Endothelial cell of umbilical vein (primary cell): ENCODE measurements at regions of chr7 and their contacts with region 1.

Region 1: DNA sequence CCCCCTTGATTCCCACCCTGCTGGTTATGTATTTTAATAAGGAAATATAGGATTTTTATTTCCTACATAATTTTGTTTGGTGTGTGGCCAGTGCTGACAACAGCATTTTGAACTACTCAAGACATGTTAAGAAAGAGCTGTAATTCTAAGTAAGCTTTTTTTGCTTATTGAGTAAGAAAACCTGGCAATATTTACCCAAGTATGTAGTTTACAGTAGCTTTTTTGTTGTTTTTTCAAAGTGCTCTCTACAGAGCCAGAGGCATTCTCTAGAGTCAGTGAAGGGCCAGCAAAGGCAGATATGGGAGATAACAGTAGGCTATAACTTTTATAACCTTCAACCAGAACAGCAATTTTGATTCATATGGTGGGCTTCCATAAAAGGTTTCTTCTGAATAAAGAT is 63.2 kb upstream of the TMEM168 start:
- DNase-seq: no peak
- H3K4me3 ChIP-seq: no peak overlapping the region
- H3K27ac ChIP-seq: no peak overlapping the region
- H3K4me1 ChIP-seq: no peaks in the 10 kb centered on the region
- H3K27me3 ChIP-seq: no peaks in the 10 kb centered on the region
- CTCF ChIP-seq: no peak
- POLR2A ChIP-seq: no peak

Region 2: GRCh38 chr7:112779667-112780066 is 73.8 kb before region 1 on chr7:
- CTCF ChIA-PET with region 1: no interaction called
- POLR2A ChIA-PET with region 1: no interaction called
- dilution Hi-C with region 1: no loop called
- intact Hi-C with region 1: no loop called
- DNase-seq: no peak
- H3K4me3 ChIP-seq: no peak overlapping the region
- H3K27ac ChIP-seq: no peak overlapping the region
- H3K4me1 ChIP-seq: peaks cover 6% of the 10 kb centered on the region
- H3K27me3 ChIP-seq: no peaks in the 10 kb centered on the region
- CTCF ChIP-seq: no peak
- POLR2A ChIP-seq: no peak

Region 3: DNA sequence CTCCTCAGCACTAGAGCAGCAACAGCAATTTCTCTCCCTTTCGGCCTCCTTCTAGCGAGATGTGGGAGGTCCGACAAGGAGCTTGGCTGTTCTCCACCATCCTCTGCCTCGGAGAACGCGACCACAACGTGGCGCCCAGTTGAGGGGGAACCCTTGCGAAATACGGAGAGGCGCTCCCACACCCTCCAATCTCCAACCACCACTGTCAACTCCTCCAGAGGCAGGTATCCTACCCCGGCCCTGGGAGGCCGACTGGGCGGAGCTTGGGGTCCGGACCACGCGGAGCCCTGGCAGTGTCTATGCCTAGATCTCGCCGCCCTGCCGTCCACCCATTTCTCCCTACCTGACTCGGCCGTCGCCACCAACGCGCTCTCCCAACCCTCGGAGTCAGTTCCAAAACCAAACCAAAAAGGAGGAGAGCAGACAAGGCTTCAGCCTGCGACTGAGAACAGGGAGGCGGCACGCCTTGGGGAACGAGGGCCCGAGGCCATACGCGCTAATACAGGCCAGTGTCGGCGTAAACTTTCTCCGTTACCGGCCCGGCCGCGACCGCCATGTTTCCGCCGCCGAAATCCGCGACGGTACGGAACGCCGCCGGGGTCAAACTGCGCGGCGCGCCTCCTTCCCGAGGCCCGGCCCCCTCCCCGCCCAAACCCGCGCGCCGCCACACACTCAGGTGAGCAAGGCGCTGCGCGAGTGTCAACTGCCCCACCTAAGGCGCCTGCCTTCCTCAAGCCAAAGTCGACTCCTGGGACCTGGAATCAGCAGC is 63.4 kb before region 1 on chr7 and contains the start of gene TMEM168:
- CTCF ChIA-PET with region 1: no interaction called
- POLR2A ChIA-PET with region 1: no interaction called
- dilution Hi-C with region 1: no loop called
- intact Hi-C with region 1: no loop called
- DNase-seq: peak; percentile 87
- H3K4me3 ChIP-seq: peak within 1 kb of the TSS; percentile 84 to 87 (median 86)
- H3K27ac ChIP-seq: peak within 1 kb of the TSS; percentile 76
- H3K4me1 ChIP-seq: peaks cover 18% of the 10 kb centered on the region
- H3K27me3 ChIP-seq: no peaks in the 10 kb centered on the region
- CTCF ChIP-seq: no peak
- POLR2A ChIP-seq: peak; percentile 85
- total RNA-seq, gene TMEM168: 23.8 and 24.4 TPM in 2 replicates

Region 4: DNA sequence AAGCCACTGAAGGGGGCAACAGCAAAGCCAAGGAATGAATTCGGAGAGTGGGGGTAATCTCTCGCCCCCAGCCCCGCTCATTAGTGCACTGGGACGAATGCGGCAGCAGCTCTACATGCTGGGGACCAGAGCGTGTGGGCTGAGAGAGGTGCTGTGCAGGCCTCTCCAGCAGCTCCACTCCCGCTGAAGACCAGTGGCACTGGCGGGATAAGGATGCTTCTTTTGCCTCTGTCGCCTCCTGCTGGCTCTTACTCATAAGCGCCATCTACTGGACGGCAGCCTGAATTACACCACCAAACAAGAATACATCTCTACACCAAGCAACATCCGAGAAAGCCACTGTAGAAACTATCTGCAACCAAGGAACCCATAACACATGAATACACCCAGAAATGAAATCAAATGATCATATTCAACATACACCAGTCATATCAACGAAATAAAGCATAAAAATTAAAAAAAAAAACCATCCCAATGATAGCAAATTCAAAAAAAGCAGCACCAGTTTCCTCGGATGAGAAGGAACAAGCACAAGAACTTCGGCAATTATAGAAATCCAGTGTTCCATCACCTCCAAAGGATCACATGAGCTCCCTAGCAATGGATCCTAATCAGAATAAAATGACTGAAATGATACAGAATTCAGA is 15.8 kb after region 1 on chr7:
- CTCF ChIA-PET with region 1: interaction called, 10 read pairs
- POLR2A ChIA-PET with region 1: no interaction called
- dilution Hi-C with region 1: no loop called
- intact Hi-C with region 1: no loop called
- DNase-seq: peak; percentile 51
- H3K4me3 ChIP-seq: no peak overlapping the region
- H3K27ac ChIP-seq: no peak overlapping the region
- H3K4me1 ChIP-seq: no peaks in the 10 kb centered on the region
- H3K27me3 ChIP-seq: no peaks in the 10 kb centered on the region
- CTCF ChIP-seq: peak; percentile 90 to 93
- POLR2A ChIP-seq: no peak

Region 5: GRCh38 chr7:112892263-112892662 is 38.8 kb after region 1 on chr7:
- CTCF ChIA-PET with region 1: no interaction called
- POLR2A ChIA-PET with region 1: no interaction called
- dilution Hi-C with region 1: no loop called
- intact Hi-C with region 1: no loop called
- DNase-seq: no peak
- H3K4me3 ChIP-seq: no peak overlapping the region
- H3K27ac ChIP-seq: no peak overlapping the region
- H3K4me1 ChIP-seq: no peaks in the 10 kb centered on the region
- H3K27me3 ChIP-seq: no peaks in the 10 kb centered on the region
- CTCF ChIP-seq: no peak
- POLR2A ChIP-seq: no peak

Region 6: GRCh38 chr7:112985377-112985987 is 132.1 kb after region 1 on chr7:
- CTCF ChIA-PET with region 1: no interaction called
- POLR2A ChIA-PET with region 1: no interaction called
- dilution Hi-C with region 1: no loop called
- intact Hi-C with region 1: no loop called
- DNase-seq: no peak
- H3K4me3 ChIP-seq: no peak overlapping the region
- H3K27ac ChIP-seq: no peak overlapping the region
- H3K4me1 ChIP-seq: no peaks in the 10 kb centered on the region
- H3K27me3 ChIP-seq: peaks cover 0 to 1% of the 10 kb centered on the region in 2 experiments
- CTCF ChIP-seq: no peak
- POLR2A ChIP-seq: no peak